Activated T-helper 2 cell treated with anti-CD3 and anti-CD28 coated beads, Interferon-gamma antibody, Interleukin-2, Interleukin-4, amounts not matched to agents 10 μg/mL and 5 μg/mL and 100 μg/mL, durations not matched to agents 14 hours and 24 hours and 36 hours (primary cell): ENCODE measurements at regions of chr19 and their contacts with region 1.

Region 1: GRCh38 chr19:1551068-1552040 is 16.8 kb downstream of the MEX3D start:
- DNase-seq: no peak
- H3K4me3 Mint-ChIP-seq: no peak overlapping the region
- H3K27ac Mint-ChIP-seq: no peak overlapping the region
- H3K4me1 Mint-ChIP-seq: no peaks in the 10 kb centered on the region
- H3K27me3 Mint-ChIP-seq: no peaks in the 10 kb centered on the region

Region 2: DNA sequence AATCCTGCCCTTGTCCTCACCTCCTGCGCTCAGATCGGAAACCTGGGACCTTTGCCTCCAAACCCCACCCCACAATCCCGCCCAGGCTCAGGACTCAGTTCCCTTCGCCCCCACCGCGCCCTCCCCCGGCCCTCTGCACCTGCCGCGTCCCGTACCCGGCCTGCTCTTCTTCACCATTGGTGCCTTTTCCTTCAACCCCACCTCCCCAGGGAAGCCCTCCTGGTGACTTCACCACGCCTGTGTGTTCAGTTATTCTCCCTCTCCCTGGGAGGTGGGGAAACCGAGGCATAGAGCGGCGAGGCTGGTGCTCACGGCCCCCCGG is 120.3 kb after region 1 on chr19:
- intact Hi-C with region 1: loop called (anchors 2 kb)
- DNase-seq: no peak
- H3K4me3 Mint-ChIP-seq: no peak overlapping the region
- H3K27ac Mint-ChIP-seq: no peak overlapping the region
- H3K4me1 Mint-ChIP-seq: peaks cover 4% of the 10 kb centered on the region
- H3K27me3 Mint-ChIP-seq: peaks cover 51% of the 10 kb centered on the region